Activated naive CD4-positive, alpha-beta T cell treated with anti-CD3 and anti-CD28 coated beads for 36 hours (primary cell): ENCODE measurements at regions of chr1 and their contacts with region 1.

Region 1: GRCh38 chr1:235999259-235999925 is 65.5 kb downstream of the NID1 start:
- DNase-seq: peak; percentile 80
- H3K4me3 Mint-ChIP-seq: peak overlapping the region; percentile 11
- H3K27ac Mint-ChIP-seq: peak overlapping the region; percentile 88
- H3K4me1 Mint-ChIP-seq: peaks cover 47% of the 10 kb centered on the region
- H3K27me3 Mint-ChIP-seq: no peaks in the 10 kb centered on the region

Region 2: GRCh38 chr1:235552146-235552716 is 447.2 kb before region 1 on chr1:
- CTCF ChIA-PET with region 1: no interaction called
- intact Hi-C with region 1: no loop called
- DNase-seq: no peak
- H3K4me3 Mint-ChIP-seq: no peak overlapping the region
- H3K27ac Mint-ChIP-seq: no peak overlapping the region
- H3K4me1 Mint-ChIP-seq: no peaks in the 10 kb centered on the region
- H3K27me3 Mint-ChIP-seq: no peaks in the 10 kb centered on the region

Region 3: GRCh38 chr1:235642011-235642942 is 357.1 kb before region 1 on chr1:
- CTCF ChIA-PET with region 1: no interaction called
- intact Hi-C with region 1: loop called (anchors 1 kb)
- DNase-seq: peak; percentile 84
- H3K4me3 Mint-ChIP-seq: peak overlapping the region; percentile 60
- H3K27ac Mint-ChIP-seq: peak overlapping the region; percentile 61
- H3K4me1 Mint-ChIP-seq: peaks cover 18% of the 10 kb centered on the region
- H3K27me3 Mint-ChIP-seq: peaks cover 30% of the 10 kb centered on the region

Region 4: DNA sequence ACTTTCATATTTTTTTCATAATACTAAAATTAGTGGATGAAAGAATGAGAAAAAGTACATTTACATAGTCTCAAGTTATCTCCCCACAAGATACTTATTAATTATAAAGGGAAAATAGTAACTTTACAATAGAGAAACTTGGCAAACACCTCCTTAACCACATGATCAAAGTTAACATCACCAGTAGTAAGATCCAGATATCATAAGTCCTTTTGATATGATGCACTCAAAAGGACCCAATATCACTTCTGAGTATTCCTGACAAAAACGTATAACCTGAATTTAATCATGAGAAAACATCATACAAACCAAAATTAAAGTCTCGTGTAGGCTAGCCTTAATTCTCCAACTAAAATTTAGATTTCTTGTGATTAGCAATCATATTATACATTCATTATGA is 200.1 kb before region 1 on chr1:
- CTCF ChIA-PET with region 1: no interaction called
- intact Hi-C with region 1: no loop called
- DNase-seq: no peak
- H3K4me3 Mint-ChIP-seq: no peak overlapping the region
- H3K27ac Mint-ChIP-seq: no peak overlapping the region
- H3K4me1 Mint-ChIP-seq: peaks cover 7% of the 10 kb centered on the region
- H3K27me3 Mint-ChIP-seq: no peaks in the 10 kb centered on the region

Region 5: DNA sequence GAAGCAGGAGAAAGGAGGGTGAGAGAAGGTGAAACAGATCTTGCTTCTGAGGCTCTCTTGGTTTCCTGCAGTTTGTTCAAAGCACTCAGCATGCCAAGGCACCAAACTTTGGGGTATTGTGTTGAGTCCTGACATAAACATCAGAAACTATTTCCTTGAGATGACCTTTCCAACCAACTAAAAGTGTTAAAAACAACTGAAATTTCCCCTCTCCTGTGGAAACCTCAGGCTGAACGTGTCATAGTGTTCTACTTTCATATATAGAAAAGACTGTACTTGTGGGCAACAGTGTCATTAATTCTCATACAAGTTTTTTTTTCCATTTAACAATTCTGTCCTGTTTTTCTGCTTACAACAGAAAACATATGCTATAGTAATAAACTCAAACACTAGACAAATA is 126.3 kb before region 1 on chr1:
- CTCF ChIA-PET with region 1: no interaction called
- intact Hi-C with region 1: loop called (anchors 1 kb)
- DNase-seq: peak; percentile 62
- H3K4me3 Mint-ChIP-seq: peak overlapping the region; percentile 49
- H3K27ac Mint-ChIP-seq: peak overlapping the region; percentile 93
- H3K4me1 Mint-ChIP-seq: peaks cover 68% of the 10 kb centered on the region
- H3K27me3 Mint-ChIP-seq: no peaks in the 10 kb centered on the region

Region 6: GRCh38 chr1:235902638-235903542 is 96.5 kb before region 1 on chr1:
- CTCF ChIA-PET with region 1: no interaction called
- intact Hi-C with region 1: no loop called
- DNase-seq: no peak
- H3K4me3 Mint-ChIP-seq: no peak overlapping the region
- H3K27ac Mint-ChIP-seq: no peak overlapping the region
- H3K4me1 Mint-ChIP-seq: peaks cover 3% of the 10 kb centered on the region
- H3K27me3 Mint-ChIP-seq: no peaks in the 10 kb centered on the region

Region 7: DNA sequence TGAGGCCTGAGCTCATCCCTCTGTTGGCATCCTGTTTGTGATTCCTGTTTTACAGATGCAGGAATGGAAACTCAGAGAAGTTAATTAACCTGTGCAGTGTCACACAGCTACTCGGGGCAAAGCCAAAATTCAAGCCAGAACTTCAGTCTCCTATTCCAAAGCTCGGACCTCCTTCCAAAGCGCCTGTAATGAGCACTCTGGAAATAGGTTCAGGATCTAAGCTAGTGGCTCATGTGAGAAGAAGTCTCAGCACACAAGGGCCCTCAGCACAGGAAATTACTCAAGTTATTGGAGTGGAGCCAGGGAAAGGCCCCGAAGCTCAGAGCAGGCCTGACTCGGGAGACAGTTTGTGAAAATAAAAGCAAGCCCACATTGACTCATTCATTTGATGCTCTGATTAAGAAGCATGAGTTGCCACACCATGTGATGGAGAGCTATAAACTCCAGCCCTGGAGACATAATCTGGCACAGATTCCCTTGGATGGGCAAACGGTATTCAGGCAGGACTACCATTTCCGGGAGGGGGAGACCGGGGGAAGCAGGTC is 82.1 kb before region 1 on chr1:
- CTCF ChIA-PET with region 1: no interaction called
- intact Hi-C with region 1: loop called (anchors 2 kb)
- DNase-seq: peak; percentile 88
- H3K4me3 Mint-ChIP-seq: no peak overlapping the region
- H3K27ac Mint-ChIP-seq: peak overlapping the region; percentile 82
- H3K4me1 Mint-ChIP-seq: peaks cover 29% of the 10 kb centered on the region
- H3K27me3 Mint-ChIP-seq: no peaks in the 10 kb centered on the region

Region 8: DNA sequence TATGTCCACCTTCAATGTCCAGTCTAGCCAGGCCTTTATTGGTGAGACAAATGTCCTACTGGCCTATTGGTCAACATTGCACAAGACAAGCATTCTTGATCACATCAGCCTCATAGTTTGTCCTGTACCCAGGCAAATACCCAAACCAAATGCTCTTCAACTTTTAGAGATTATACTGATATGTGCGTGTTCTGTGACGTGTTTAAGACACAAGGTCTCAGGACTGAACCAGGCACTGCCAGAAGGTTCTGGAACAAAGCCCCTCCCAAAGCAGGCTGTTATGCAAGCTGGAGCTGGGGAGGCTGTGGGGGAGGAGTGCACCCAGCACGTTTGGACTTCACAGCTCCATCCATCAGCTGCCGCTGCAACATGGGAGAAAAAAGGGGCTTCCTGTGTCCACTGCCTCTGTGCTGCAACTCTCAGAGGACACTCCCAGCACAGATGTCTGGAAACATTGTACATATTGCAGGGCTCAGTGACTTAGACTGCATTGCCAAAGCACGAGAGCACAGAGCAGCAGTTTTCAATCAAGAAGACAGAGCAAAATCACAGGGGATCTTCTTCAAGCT is 19.6 kb after region 1 on chr1:
- CTCF ChIA-PET with region 1: no interaction called
- intact Hi-C with region 1: no loop called
- DNase-seq: no peak
- H3K4me3 Mint-ChIP-seq: no peak overlapping the region
- H3K27ac Mint-ChIP-seq: no peak overlapping the region
- H3K4me1 Mint-ChIP-seq: no peaks in the 10 kb centered on the region
- H3K27me3 Mint-ChIP-seq: no peaks in the 10 kb centered on the region

Region 9: DNA sequence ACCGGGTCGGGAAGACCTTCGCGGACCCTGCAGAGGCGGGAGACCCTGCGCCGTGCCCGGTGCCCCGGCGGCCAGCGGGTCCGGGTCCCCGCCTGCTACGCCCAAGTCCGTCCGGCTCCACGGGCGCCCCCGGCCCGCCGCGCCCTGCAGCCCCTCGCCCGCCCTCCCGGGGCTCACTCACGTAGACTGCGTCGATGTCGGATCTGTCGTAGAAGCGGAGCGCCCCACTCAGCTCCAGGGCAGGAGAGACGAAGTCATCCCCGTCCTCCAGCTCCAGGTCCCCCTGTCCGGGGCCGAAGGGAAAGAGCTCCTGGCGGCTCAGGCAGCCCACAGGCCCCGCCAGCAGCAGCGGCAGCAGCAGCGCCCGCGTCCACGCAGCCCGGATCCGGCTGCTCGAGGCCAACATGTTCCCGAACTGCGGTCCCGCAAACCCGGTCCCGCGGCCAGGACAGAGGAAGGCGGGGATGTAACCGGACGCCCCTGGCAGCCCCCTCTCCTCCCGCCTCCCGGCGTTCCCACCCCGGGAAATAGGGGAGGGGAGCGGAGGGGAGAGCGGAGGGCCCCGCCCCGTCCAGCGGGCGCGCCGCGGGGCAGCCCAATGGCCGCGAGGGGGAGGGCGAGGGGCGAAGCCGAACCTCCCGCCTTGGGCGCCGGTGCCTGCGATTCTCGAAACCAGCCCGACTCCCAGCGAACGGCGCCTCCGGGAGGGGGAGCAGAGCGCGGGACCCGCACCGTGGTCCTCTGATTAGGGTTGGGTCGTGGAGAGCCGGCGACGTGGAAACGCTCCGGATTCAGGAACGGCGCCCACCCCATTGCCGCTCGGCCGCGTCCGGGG is 65.5 kb after region 1 on chr1 and contains the start of gene NID1:
- CTCF ChIA-PET with region 1: interaction called, 3 read pairs
- intact Hi-C with region 1: loop called (anchors 1 kb)
- DNase-seq: peak; percentile 25
- H3K4me3 Mint-ChIP-seq: peak within 1 kb of the TSS; percentile 63
- H3K27ac Mint-ChIP-seq: no peak within 1 kb of the TSS
- H3K4me1 Mint-ChIP-seq: peaks cover 26% of the 10 kb centered on the region
- H3K27me3 Mint-ChIP-seq: peaks cover 38% of the 10 kb centered on the region
- total RNA-seq, gene NID1: 0.10 TPM in 1 of 2 experiments, not detected in the other